ENCODE measurements at regions of chr3 and their contacts with region 1.

Region 1: DNA sequence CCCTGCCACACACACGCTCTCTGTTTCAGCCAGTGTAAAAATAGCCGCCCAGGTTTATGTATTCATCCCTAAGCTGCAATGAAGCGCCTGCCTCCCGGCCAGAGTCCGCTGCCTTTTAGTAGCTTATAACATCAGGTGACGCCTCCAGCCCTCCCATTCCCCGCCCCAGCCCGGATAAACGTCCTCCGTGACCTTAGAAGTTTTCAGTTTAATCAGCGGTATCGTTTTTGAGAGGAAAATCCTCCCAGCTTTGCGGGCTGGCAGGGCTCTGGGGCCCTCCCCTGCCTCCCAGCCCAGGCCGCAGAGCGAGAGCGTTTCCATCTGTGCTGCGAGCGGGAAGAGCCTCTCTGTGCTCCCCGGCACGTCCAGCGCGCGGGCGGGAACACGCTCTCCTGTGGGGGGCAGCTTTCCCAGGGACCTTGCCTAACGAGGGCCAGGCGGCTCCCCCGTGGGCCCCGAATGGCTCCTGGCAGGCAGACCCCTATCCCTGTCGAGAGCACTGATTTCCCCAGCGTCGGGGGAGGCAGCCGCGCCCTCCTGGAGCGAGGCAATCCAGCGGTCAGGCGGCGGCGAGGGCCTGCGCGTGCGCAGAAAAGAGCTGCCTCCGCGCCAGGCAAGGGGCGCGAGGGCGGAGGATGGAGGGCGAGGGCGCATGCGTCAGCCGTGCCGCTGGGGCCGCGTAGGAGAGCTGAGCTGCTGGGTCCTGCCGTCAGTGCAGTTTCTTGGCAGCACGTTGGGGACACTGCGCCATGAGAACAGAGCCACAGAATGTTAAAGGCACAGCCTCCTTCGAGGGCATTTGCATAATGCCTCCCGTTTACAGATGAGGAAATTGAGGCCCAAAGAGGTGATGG is 71.1 kb downstream of the CCNL1 start:
- DNase-seq: peak; percentile 97
- ATAC-seq: peak; percentile 96
- H3K4me3 Mint-ChIP-seq: peak overlapping the region; percentile 88
- H3K27ac Mint-ChIP-seq: peak overlapping the region; percentile 93
- H3K4me1 Mint-ChIP-seq: peaks cover 40% of the 10 kb centered on the region
- H3K27me3 Mint-ChIP-seq: no peaks in the 10 kb centered on the region

Region 2: DNA sequence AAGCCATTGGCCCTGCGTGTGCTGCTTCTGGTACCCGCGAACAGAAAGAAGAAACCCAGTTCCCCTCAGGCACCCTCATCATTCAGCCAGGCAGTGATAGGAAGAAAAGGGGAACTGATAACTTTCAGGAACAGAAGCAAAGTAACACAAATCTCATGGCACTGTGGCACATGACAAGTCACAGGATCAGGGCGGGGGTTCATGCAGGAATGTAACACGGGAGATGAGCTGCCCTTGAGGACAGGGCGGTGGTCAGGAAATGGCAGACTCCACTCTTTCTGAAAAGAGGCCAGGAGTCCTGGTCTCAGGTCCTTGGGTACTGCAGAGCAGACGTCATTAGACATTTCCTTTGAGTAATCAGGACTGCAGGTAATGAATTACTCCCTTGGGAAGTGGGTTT is 24.4 kb before region 1 on chr3:
- POLR2A ChIA-PET with region 1: no interaction called
- DNase-seq: no peak
- ATAC-seq: no peak
- H3K4me3 Mint-ChIP-seq: no peak overlapping the region
- H3K27ac Mint-ChIP-seq: no peak overlapping the region
- H3K4me1 Mint-ChIP-seq: peaks cover 11% of the 10 kb centered on the region
- H3K27me3 Mint-ChIP-seq: peaks cover 4% of the 10 kb centered on the region

Region 3: GRCh38 chr3:157130467-157131251 is 41.8 kb after region 1 on chr3:
- POLR2A ChIA-PET with region 1: interaction called, 49 read pairs
- DNase-seq: peak; percentile 66
- ATAC-seq: peak; percentile 41
- H3K4me3 Mint-ChIP-seq: peak overlapping the region; percentile 69
- H3K27ac Mint-ChIP-seq: peak overlapping the region; percentile 96
- H3K4me1 Mint-ChIP-seq: peaks cover 72% of the 10 kb centered on the region
- H3K27me3 Mint-ChIP-seq: no peaks in the 10 kb centered on the region

Region 4: DNA sequence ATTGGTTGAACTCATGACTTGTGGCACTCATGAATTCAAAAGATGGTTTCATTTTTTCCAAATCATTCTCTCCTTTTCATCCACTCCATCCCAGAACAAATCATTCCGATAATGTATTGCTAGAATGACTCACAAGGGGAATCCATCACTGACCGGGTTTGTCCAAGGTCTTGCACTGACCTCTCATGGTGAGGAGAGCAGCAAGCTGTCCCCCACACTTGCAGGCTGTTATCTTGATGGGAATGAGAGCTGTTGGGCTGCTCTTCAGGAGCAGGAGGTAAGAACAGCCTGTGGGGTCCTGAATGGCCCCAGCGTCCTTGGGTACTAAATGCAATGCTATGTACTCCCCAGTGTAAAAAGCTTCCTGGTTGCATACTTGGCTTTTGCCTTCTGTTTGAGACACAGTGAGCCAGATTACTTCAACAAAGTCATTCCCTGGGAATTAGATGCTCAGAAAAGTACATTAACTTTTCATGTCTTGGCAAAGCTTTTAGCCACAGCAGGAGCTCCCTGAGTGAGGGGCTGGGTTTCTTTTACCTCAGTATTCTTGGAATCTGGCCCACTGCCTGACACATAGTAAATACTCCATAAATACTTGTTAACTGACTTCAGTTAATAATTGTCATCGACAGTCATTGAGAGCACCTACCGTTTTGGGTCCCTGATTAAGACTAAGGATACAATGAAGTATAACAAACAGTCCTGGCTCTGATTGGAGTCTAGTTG is 47.0 kb after region 1 on chr3:
- POLR2A ChIA-PET with region 1: interaction called, 49 read pairs
- DNase-seq: no peak
- ATAC-seq: no peak
- H3K4me3 Mint-ChIP-seq: no peak overlapping the region
- H3K27ac Mint-ChIP-seq: peak overlapping the region; percentile 73
- H3K4me1 Mint-ChIP-seq: peaks cover 54% of the 10 kb centered on the region
- H3K27me3 Mint-ChIP-seq: no peaks in the 10 kb centered on the region

Region 5: GRCh38 chr3:157190388-157190872 is 101.6 kb after region 1 on chr3:
- POLR2A ChIA-PET with region 1: no interaction called
- DNase-seq: no peak
- ATAC-seq: no peak
- H3K4me3 Mint-ChIP-seq: no peak overlapping the region
- H3K27ac Mint-ChIP-seq: no peak overlapping the region
- H3K4me1 Mint-ChIP-seq: no peaks in the 10 kb centered on the region
- H3K27me3 Mint-ChIP-seq: peaks cover 1% of the 10 kb centered on the region